ENCODE measurements at regions of chrX and their contacts with region 1.

Region 1: DNA sequence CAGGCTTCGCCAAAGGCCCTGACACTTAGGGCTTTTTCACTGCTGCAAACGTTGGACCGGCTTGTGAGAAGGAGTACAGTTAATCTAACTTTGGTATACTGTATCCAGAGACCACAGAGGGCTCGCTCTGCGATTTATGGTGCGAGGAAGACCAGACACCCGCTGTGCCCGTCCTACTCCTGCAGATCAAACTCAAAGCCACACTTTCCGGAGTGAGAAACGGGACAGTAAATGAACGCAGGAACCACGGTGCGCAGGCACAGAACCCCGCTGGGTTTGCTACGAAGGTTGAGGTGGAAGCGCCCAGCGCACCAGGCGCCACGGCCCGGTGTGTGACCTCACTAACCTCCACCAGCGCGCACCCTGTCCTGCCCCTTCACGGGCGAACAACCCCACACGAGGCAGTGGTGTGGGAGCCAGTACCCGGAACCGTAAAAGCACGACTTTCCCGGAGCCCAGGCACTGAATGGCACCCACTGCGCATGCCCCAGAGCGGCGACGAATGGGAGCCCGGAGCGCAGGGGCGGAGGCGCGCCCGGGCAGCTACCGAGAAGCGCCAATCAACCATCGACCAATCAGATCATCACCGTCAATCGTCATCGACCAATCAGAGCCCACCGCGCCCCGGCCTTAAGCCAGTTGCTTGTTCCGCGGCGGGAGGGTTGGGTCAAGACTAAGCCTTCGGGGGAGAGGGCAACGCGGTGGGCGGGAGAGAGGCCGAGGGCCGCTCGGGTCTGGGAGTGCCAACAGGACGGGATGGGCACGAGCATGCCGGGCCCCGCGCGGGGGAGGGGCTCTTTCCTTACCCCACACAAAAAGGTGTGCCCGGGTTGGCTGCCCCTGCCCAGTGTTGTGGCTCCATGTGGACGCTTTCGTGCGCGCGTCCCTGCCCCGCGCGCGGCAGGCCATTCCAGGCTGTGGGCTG is 21.3 kb upstream of the WDR45 start:
- DNase-seq: peak; percentile 97
- H3K4me3 Mint-ChIP-seq: peak overlapping the region; percentile 90
- H3K27ac Mint-ChIP-seq: peak overlapping the region; percentile 90
- H3K4me1 Mint-ChIP-seq: peaks cover 3% of the 10 kb centered on the region
- H3K27me3 Mint-ChIP-seq: no peaks in the 10 kb centered on the region

Region 2: DNA sequence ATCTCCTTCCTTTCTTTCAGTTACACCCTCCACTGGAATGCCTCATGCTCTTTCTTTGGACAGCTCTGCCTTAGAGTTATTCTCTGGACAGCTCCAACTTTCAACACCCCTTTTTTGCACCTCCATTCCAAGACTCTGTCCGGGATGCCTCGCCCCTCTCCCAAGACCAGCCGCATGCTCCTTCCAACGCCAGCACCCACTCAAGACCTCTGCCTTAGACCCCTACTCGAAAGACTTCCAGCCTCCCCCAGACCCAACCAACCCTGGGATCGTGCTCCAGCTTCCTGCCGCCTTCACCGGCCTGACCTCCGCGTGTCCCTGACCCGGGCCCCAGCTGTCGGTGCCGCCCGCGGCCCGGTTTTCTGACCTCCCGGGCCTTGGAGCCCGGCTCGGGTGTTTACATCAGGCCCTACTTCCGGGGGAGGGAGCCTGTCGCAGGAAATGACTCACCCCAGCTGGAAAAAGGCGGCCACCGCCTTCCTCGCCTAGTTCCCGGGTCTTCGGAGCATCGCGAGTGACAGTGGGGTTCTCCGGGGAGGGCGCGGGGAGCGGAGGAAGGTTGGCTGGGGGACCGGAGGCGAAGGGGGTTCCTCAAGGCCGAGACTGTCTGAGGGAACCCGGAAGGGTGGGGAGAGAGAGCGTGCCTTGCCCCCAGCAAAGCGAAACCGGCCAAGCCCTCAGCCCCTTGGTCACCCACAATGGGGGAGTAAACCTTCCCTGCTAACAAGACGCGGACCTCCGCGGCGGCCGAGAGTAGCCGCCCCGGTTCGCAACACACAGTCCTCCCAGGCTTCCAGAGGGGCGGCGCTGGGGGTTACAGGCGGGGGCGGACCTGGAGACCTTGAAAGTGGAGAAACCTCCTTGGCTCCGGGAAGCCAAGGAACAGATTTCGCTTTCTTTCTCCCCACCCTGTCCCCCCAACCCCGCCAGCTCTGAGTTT is 21.2 kb before region 1 on chrX and contains the start of gene WDR45:
- intact Hi-C with region 1: loop called (anchors 2 kb)
- DNase-seq: peak; percentile 92
- H3K4me3 Mint-ChIP-seq: peak within 1 kb of the TSS; percentile 97
- H3K27ac Mint-ChIP-seq: peak within 1 kb of the TSS; percentile 96
- H3K4me1 Mint-ChIP-seq: peaks cover 15% of the 10 kb centered on the region
- H3K27me3 Mint-ChIP-seq: no peaks in the 10 kb centered on the region
- total RNA-seq, gene WDR45: 38.7 and 40.8 TPM in 2 replicates

Region 3: DNA sequence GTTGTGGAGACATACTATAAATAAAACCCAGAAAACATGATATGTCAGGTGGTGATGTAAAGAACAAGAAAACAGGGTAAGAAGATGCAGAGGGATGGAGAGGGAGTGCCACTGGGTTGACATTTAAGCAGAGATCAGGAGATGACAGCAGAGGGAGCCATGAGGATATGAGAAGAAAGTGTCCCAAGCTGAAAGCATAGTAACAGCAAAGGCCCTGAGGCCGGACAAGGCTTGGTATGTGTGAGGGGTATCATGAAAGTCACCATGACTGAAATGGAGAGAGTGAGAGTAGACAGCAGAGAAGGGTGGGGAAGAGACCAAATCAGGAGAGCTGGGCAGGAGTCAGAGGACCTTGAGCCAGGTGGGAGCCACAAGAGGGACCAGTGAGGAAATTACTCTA is 19.1 kb after region 1 on chrX:
- intact Hi-C with region 1: loop called (anchors 1 kb)
- DNase-seq: peak; percentile 54
- H3K4me3 Mint-ChIP-seq: no peak overlapping the region
- H3K27ac Mint-ChIP-seq: peak overlapping the region; percentile 42
- H3K4me1 Mint-ChIP-seq: peaks cover 28% of the 10 kb centered on the region
- H3K27me3 Mint-ChIP-seq: no peaks in the 10 kb centered on the region

Region 4: DNA sequence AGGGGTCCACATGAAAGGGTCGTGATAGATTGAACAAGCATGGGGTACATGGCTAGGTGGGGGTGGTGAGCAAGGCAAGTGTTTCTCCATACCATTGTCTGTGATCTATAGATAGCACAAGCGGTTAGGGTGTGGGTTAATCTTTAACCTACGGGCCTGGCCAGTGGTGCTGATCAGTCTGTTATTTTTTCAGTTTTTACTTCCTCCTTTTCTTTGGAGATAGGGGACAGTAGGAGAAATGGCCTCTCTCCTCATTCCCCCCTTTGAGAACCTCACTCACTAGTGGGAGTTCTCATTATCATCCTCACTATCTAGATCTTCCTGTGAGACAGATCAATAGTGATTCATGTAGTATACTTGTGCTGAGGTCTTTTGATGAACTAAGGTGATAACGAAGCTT is 38.7 kb after region 1 on chrX:
- intact Hi-C with region 1: no loop called
- DNase-seq: no peak
- H3K4me3 Mint-ChIP-seq: no peak overlapping the region
- H3K27ac Mint-ChIP-seq: no peak overlapping the region
- H3K4me1 Mint-ChIP-seq: peaks cover 2% of the 10 kb centered on the region
- H3K27me3 Mint-ChIP-seq: no peaks in the 10 kb centered on the region

Region 5: GRCh38 chrX:49163555-49164419 is 62.8 kb after region 1 on chrX:
- intact Hi-C with region 1: loop called (anchors 10 kb)
- DNase-seq: peak; percentile 95
- H3K4me3 Mint-ChIP-seq: peak overlapping the region; percentile 87
- H3K27ac Mint-ChIP-seq: peak overlapping the region; percentile 94
- H3K4me1 Mint-ChIP-seq: peaks cover 26% of the 10 kb centered on the region
- H3K27me3 Mint-ChIP-seq: peaks cover 2% of the 10 kb centered on the region